Activated CD4-positive, alpha-beta memory T cell treated with anti-CD3 and anti-CD28 coated beads, Interleukin-2, amount 10 ng/mL, durations not matched to agents 7 days and 5 days (primary cell): ENCODE measurements at regions of chr5 and their contacts with region 1.

Region 1: DNA sequence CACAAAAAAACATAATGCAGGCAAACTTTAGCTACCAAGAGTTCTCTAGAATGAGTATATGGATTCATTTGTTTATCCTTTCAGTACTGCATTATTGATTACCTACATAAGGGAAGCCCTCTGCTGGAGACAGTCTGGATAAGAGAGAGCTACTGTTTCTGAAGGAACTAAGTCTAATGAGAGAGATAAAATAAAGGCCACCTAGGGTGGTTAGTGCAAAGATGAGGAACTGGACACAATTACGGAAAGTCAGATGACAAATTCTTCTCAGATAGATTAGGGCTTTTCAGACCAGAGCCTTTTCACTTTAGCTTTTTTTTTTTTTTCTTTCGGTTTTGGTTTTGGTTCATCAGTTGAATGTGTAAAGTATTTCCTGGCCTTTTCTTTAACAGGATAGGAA is 31.3 kb downstream of the ISOC1 start:
- DNase-seq: no peak
- H3K4me3 Mint-ChIP-seq: peak overlapping the region; percentile 43
- H3K27ac Mint-ChIP-seq: peak overlapping the region; percentile 81
- H3K4me1 Mint-ChIP-seq: peaks cover 15% of the 10 kb centered on the region
- H3K27me3 Mint-ChIP-seq: no peaks in the 10 kb centered on the region

Region 2: DNA sequence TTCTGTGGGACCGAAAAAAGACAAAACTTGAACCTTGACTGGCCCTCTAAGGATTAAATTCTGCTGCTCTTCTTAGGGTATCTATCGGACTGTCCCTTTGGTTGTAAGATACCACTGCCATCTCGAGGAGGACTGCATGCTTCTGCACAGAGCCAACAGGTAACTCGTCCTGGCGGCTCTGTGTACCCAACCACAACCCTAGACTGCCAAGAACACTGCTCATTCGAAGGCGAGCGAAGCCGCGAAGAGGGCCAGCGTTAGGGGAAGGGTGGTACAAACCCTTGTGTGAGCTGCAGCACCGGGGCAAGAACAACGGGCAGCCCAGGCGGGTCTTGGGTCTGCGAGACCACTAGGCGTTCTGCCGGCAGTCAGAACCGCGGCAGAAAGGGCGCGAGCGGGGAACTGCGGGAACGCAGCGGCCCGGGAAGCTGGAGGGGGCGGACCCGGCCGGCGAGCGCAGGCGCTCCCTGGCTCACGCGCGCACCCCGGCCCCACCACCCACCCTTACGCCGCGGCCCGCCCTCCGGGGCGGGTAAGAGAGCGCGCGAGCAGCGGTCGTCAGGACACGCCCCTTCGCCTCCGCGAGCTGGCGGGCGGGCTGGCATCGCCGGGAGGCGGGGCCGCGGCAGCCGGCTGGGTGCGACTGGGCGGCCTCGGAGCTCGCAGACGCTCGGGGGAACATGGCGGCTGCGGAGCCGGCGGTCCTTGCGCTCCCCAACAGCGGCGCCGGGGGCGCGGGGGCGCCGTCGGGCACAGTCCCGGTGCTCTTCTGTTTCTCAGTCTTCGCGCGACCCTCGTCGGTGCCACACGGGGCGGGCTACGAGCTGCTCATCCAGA is 31.5 kb before region 1 on chr5 and contains the start of gene ISOC1:
- CTCF ChIA-PET with region 1: interaction called, 63 read pairs
- POLR2A ChIA-PET with region 1: interaction called, 34 read pairs
- DNase-seq: peak; percentile 91
- H3K4me3 Mint-ChIP-seq: peak within 1 kb of the TSS; percentile 81
- H3K27ac Mint-ChIP-seq: peak within 1 kb of the TSS; percentile 63
- H3K4me1 Mint-ChIP-seq: peaks cover 29% of the 10 kb centered on the region
- H3K27me3 Mint-ChIP-seq: peaks cover 17% of the 10 kb centered on the region
- total RNA-seq, gene ISOC1: 14.4 to 16.4 TPM